B cell (primary cell): ENCODE measurements at regions of chr10 and their contacts with region 1.

Region 1: GRCh38 chr10:116849248-116850057 is at the start of gene ENO4:
- DNase-seq: peak; percentile 77
- ATAC-seq: peak; percentile 48
- H3K4me3 ChIP-seq: peak within 1 kb of the TSS in 4 of 5 experiments; percentile 38 to 82 (median 61)
- H3K4me3 Mint-ChIP-seq: peak within 1 kb of the TSS; percentile 86
- H3K27ac ChIP-seq: peak within 1 kb of the TSS; percentile 75 to 77
- H3K27ac Mint-ChIP-seq: peak within 1 kb of the TSS; percentile 93
- H3K4me1 ChIP-seq: peaks cover 11 to 35% of the 10 kb centered on the region in 2 donors
- H3K4me1 Mint-ChIP-seq: peaks cover 37% of the 10 kb centered on the region
- H3K27me3 ChIP-seq: peaks cover 0 to 28% (median 4%) of the 10 kb centered on the region in 4 experiments
- H3K27me3 Mint-ChIP-seq: peaks cover 13% of the 10 kb centered on the region
- CTCF ChIP-seq: no peak
- total RNA-seq, gene ENO4: 0.37 and 0.46 TPM in 2 replicates

Region 2: DNA sequence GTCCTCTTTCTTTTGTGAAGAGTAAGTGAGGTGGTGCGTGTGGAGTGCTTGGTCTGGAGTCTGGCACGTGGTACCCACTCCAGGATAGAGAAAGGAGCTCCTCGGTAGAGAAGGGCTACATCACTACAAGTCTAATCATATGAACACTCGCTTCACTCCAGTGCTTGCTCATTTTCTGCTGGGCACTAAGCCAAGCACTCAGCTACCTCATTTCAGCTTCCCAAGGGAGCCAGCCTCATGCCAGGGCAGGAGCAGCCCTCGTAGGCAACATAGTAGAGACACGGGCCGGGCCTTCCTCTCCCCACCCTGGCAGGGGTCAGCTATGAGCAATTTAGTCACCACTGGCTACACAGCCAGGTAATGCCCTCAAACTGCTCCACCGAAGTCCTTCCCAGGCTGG is 95.7 kb before region 1 on chr10:
- CTCF ChIA-PET with region 1: no interaction called
- POLR2A ChIA-PET with region 1: no interaction called
- intact Hi-C with region 1: no loop called
- DNase-seq: no peak
- ATAC-seq: no peak
- H3K4me3 ChIP-seq: no peak overlapping the region
- H3K4me3 Mint-ChIP-seq: no peak overlapping the region
- H3K27ac ChIP-seq: no peak overlapping the region
- H3K27ac Mint-ChIP-seq: no peak overlapping the region
- H3K4me1 ChIP-seq: no peaks in the 10 kb centered on the region
- H3K4me1 Mint-ChIP-seq: no peaks in the 10 kb centered on the region
- H3K27me3 ChIP-seq: peaks cover 0 to 7% (median 0%) of the 10 kb centered on the region in 4 experiments
- H3K27me3 Mint-ChIP-seq: peaks cover 18% of the 10 kb centered on the region
- CTCF ChIP-seq: no peak

Region 3: GRCh38 chr10:116796910-116797513 is 52.4 kb before region 1 on chr10:
- CTCF ChIA-PET with region 1: interaction called, 4 read pairs
- POLR2A ChIA-PET with region 1: no interaction called
- intact Hi-C with region 1: loop called (anchors 2 kb)
- DNase-seq: peak; percentile 66
- ATAC-seq: peak; percentile 49
- H3K4me3 ChIP-seq: no peak overlapping the region
- H3K4me3 Mint-ChIP-seq: no peak overlapping the region
- H3K27ac ChIP-seq: no peak overlapping the region
- H3K27ac Mint-ChIP-seq: no peak overlapping the region
- H3K4me1 ChIP-seq: no peaks in the 10 kb centered on the region
- H3K4me1 Mint-ChIP-seq: no peaks in the 10 kb centered on the region
- H3K27me3 ChIP-seq: no peaks in the 10 kb centered on the region
- H3K27me3 Mint-ChIP-seq: peaks cover 19% of the 10 kb centered on the region
- CTCF ChIP-seq: peak; percentile 79

Region 4: DNA sequence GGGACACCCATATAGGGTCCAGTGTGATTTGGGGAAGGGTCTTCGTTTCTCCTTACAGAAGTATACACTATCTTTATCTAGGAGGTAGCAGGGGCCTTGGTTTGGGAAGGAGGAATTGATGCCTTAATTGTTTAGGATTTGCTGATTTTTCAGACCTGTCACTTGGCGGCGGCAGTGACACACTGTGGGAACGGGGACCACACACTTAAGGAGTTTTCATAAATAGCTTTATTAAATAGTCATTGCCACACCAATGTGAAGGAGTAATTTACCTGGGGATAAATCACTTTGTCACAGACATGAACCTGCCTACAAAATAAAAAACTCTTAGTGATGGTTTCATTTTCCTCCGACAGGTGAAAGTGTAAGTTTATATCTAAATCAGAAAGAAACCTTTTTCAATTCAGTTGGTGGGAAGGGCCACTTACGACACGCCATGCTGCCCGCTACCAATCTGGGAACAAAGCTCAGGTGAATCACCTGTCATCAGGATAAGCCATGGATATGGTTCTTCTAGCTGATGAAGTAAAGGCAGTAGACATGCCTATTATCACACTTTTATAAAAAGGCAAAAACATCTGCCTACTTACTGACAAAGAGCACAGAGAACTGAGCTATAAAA is 12.4 kb before region 1 on chr10:
- CTCF ChIA-PET with region 1: no interaction called
- POLR2A ChIA-PET with region 1: interaction called, 3 read pairs
- intact Hi-C with region 1: loop called (anchors 1 kb)
- DNase-seq: no peak
- ATAC-seq: no peak
- H3K4me3 ChIP-seq: no peak overlapping the region
- H3K4me3 Mint-ChIP-seq: no peak overlapping the region
- H3K27ac ChIP-seq: no peak overlapping the region
- H3K27ac Mint-ChIP-seq: no peak overlapping the region
- H3K4me1 ChIP-seq: no peaks in the 10 kb centered on the region
- H3K4me1 Mint-ChIP-seq: peaks cover 19% of the 10 kb centered on the region
- H3K27me3 ChIP-seq: no peaks in the 10 kb centered on the region
- H3K27me3 Mint-ChIP-seq: no peaks in the 10 kb centered on the region
- CTCF ChIP-seq: no peak

Region 5: GRCh38 chr10:116952729-116953128 is 103.3 kb after region 1 on chr10:
- CTCF ChIA-PET with region 1: no interaction called
- POLR2A ChIA-PET with region 1: no interaction called
- intact Hi-C with region 1: no loop called
- DNase-seq: no peak
- ATAC-seq: no peak
- H3K4me3 ChIP-seq: no peak overlapping the region
- H3K4me3 Mint-ChIP-seq: no peak overlapping the region
- H3K27ac ChIP-seq: no peak overlapping the region
- H3K27ac Mint-ChIP-seq: no peak overlapping the region
- H3K4me1 ChIP-seq: no peaks in the 10 kb centered on the region
- H3K4me1 Mint-ChIP-seq: no peaks in the 10 kb centered on the region
- H3K27me3 ChIP-seq: no peaks in the 10 kb centered on the region
- H3K27me3 Mint-ChIP-seq: peaks cover 9% of the 10 kb centered on the region
- CTCF ChIP-seq: no peak

Region 6: GRCh38 chr10:117375360-117376178 is 526.1 kb after region 1 on chr10 and contains the start of gene PDZD8:
- CTCF ChIA-PET with region 1: no interaction called
- POLR2A ChIA-PET with region 1: no interaction called
- intact Hi-C with region 1: loop called (anchors 5 kb)
- DNase-seq: peak; percentile 93
- ATAC-seq: peak; percentile 89
- H3K4me3 ChIP-seq: peak within 1 kb of the TSS; percentile 76 to 99 (median 90)
- H3K4me3 Mint-ChIP-seq: peak within 1 kb of the TSS; percentile 97
- H3K27ac ChIP-seq: peak within 1 kb of the TSS; percentile 70 to 80
- H3K27ac Mint-ChIP-seq: peak within 1 kb of the TSS; percentile 91
- H3K4me1 ChIP-seq: peaks cover 17 to 24% of the 10 kb centered on the region in 2 donors
- H3K4me1 Mint-ChIP-seq: peaks cover 31% of the 10 kb centered on the region
- H3K27me3 ChIP-seq: peaks cover 0 to 23% (median 4%) of the 10 kb centered on the region in 4 experiments
- H3K27me3 Mint-ChIP-seq: peaks cover 25% of the 10 kb centered on the region
- CTCF ChIP-seq: no peak
- total RNA-seq, gene PDZD8: 11.3 and 13.2 TPM in 2 replicates

Region 7: DNA sequence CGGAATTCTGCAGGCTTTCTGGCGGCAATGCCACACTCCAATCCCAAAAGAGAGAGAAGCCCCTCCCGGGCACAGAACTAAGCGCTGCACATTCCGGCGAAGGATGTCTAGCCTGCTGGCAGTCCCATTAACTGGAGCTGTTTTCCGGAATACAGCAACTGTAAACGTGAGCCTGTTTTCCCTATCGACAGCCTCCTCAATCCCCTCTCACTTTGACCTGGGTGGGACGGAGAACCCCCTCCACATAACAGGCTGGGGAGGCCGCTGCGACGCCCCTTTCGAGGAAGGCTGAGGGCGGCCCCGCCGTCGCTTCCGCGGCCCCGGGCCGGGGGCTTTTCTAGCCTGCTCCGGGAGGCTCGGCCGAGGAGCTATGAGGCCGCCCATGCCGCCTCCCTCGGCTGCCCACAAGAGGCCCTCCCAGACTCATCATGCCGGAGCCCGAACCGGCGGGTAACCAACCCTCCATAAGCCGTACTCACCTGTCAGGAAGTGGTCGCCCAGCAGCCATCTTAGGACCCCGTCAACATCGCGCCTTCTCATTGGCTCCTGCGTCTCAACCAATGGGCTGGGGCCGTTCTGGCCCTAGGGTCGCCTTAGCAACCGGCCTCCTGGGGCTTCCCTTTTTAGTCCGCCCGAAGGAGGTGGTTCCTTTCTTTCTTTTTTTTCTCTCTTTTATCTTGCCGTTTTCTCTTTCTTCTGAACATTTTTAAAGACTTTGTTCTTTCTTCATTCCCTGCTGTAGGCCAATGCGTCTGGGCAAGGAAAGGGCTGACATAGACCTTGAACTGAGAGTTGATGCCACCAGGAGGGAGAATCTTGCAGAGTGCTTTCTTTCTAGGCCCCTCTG is 1492.6 kb after region 1 on chr10 and contains the start of gene FAM204A:
- CTCF ChIA-PET with region 1: no interaction called
- POLR2A ChIA-PET with region 1: no interaction called
- intact Hi-C with region 1: loop called (anchors 10 kb)
- DNase-seq: peak; percentile 98
- ATAC-seq: peak; percentile 98
- H3K4me3 ChIP-seq: peak within 1 kb of the TSS; percentile 82 to 96 (median 94)
- H3K4me3 Mint-ChIP-seq: peak within 1 kb of the TSS; percentile 95
- H3K27ac ChIP-seq: peak within 1 kb of the TSS; percentile 31 to 90
- H3K27ac Mint-ChIP-seq: peak within 1 kb of the TSS; percentile 96
- H3K4me1 ChIP-seq: peaks cover 20 to 21% of the 10 kb centered on the region in 2 donors
- H3K4me1 Mint-ChIP-seq: peaks cover 51% of the 10 kb centered on the region
- H3K27me3 ChIP-seq: no peaks in the 10 kb centered on the region
- H3K27me3 Mint-ChIP-seq: peaks cover 4% of the 10 kb centered on the region
- CTCF ChIP-seq: no peak
- total RNA-seq, gene FAM204A: 77.8 and 79.8 TPM in 2 replicates